Activated CD4-positive, alpha-beta T cell treated with anti-CD3 and anti-CD28 coated beads, Interleukin-2, amount 10 ng/mL, durations not matched to agents 24 days and 14 days (primary cell): ENCODE measurements at regions of chr18 and their contacts with region 1.

Region 1: DNA sequence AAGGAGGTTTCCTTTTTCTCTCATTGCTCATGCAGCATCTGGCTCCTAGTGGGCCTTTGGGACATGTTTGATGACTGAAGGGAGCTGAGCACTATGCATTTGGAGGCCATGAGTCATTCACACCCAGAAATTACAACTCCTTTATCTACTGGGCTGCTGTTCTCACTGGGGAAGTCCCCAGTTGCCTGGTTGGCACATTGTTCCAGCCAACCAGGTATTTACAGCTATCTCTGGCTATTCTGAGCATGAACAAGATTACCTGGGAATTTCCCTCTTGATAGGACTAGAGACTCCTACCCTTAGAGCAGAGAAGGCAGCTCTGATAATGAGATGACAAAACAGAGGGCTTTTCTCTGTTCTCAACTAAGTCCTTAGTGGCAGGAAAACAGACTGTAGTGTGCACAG is 206.5 kb downstream of the SETBP1 start:
- DNase-seq: peak; percentile 73
- H3K4me3 Mint-ChIP-seq: peak overlapping the region; percentile 59
- H3K27ac Mint-ChIP-seq: peak overlapping the region; percentile 93
- H3K4me1 Mint-ChIP-seq: peaks cover 27% of the 10 kb centered on the region
- H3K27me3 Mint-ChIP-seq: peaks cover 2% of the 10 kb centered on the region

Region 2: GRCh38 chr18:44819944-44820510 is 67.2 kb before region 1 on chr18:
- intact Hi-C with region 1: loop called (anchors 2 kb)
- DNase-seq: no peak
- H3K4me3 Mint-ChIP-seq: no peak overlapping the region
- H3K27ac Mint-ChIP-seq: no peak overlapping the region
- H3K4me1 Mint-ChIP-seq: peaks cover 18% of the 10 kb centered on the region
- H3K27me3 Mint-ChIP-seq: peaks cover 31% of the 10 kb centered on the region

Region 3: GRCh38 chr18:44838971-44839666 is 48.1 kb before region 1 on chr18:
- intact Hi-C with region 1: loop called (anchors 1 kb)
- DNase-seq: peak; percentile 92
- H3K4me3 Mint-ChIP-seq: peak overlapping the region; percentile 22
- H3K27ac Mint-ChIP-seq: peak overlapping the region; percentile 9
- H3K4me1 Mint-ChIP-seq: peaks cover 32% of the 10 kb centered on the region
- H3K27me3 Mint-ChIP-seq: no peaks in the 10 kb centered on the region

Region 4: GRCh38 chr18:44917216-44918141 is 30.2 kb after region 1 on chr18:
- intact Hi-C with region 1: no loop called
- DNase-seq: no peak
- H3K4me3 Mint-ChIP-seq: no peak overlapping the region
- H3K27ac Mint-ChIP-seq: no peak overlapping the region
- H3K4me1 Mint-ChIP-seq: peaks cover 2% of the 10 kb centered on the region
- H3K27me3 Mint-ChIP-seq: peaks cover 8% of the 10 kb centered on the region